ENCODE measurements at regions of chr12 and their contacts with region 1.

Region 1: GRCh38 chr12:19186722-19187661 is 57.5 kb downstream of the PLEKHA5 start:
- DNase-seq: peak; percentile 66
- H3K4me3 Mint-ChIP-seq: no peak overlapping the region
- H3K27ac Mint-ChIP-seq: peak overlapping the region; percentile 39
- H3K4me1 Mint-ChIP-seq: peaks cover 31% of the 10 kb centered on the region
- H3K27me3 Mint-ChIP-seq: no peaks in the 10 kb centered on the region
- CTCF ChIP-seq: peak; percentile 43

Region 2: DNA sequence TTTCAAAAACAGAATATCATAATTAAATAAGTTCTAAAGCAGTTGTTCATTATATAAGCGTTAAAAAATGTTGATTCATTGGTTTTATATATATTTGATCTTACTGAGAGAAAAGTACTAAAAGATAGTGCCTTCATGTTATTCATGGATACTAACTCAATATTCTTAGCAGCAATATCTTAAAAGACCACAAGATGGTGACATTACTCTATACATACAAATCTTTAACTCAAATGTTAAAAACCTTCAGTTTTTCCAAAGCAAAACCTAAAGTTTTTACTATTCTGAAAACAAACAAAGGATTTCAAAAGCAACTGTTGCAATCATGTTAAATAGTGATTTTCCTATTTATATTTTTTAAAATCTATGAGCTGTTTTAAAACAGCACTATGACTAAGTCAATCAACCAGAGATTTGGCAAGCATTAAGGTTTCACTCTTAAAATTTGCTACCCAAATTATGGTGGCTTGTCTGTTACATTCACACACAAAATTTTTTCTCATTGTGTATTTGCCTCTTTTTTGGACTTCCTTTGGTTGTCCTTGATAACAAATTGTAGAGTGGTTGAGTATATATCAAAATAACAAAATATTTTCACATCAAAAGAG is 1046.9 kb before region 1 on chr12:
- CTCF ChIA-PET with region 1: interaction called, 3 read pairs
- POLR2A ChIA-PET with region 1: no interaction called
- intact Hi-C with region 1: loop called (anchors 10 kb)
- DNase-seq: peak; percentile 45
- H3K4me3 Mint-ChIP-seq: no peak overlapping the region
- H3K27ac Mint-ChIP-seq: no peak overlapping the region
- H3K4me1 Mint-ChIP-seq: peaks cover 17% of the 10 kb centered on the region
- H3K27me3 Mint-ChIP-seq: no peaks in the 10 kb centered on the region
- CTCF ChIP-seq: peak; percentile 69

Region 3: DNA sequence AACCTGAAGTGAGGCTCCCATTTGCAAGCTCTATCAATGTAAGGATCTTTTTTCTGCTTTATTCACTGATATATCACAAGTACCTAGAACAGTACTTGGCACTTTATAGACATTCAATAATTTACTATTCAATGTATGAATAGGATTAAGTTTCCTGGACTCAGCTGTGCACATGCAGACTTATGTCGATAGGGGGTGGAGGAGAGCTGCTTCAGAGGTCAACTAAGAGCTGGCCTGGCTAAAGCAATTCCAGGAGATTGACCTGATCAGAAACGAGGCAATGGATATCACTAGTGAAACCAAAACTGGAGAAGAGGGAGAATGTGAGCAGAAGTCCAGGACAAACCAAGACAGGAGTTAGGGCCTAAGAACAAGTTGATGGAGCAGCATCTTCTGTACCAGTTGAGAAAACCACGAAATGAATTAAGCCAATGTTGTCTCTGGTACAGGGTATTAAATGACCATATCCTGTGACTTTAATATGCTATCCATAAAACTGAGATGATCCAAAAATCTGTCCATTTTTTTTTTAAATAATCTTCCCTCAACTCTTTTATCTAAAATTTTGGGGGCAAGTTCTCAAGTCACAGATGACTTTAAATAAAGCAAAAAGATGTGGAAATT is 756.5 kb before region 1 on chr12:
- CTCF ChIA-PET with region 1: interaction called, 32 read pairs
- POLR2A ChIA-PET with region 1: no interaction called
- intact Hi-C with region 1: loop called (anchors 1 kb)
- DNase-seq: peak; percentile 70
- H3K4me3 Mint-ChIP-seq: no peak overlapping the region
- H3K27ac Mint-ChIP-seq: no peak overlapping the region
- H3K4me1 Mint-ChIP-seq: peaks cover 10% of the 10 kb centered on the region
- H3K27me3 Mint-ChIP-seq: no peaks in the 10 kb centered on the region
- CTCF ChIP-seq: peak; percentile 91

Region 4: DNA sequence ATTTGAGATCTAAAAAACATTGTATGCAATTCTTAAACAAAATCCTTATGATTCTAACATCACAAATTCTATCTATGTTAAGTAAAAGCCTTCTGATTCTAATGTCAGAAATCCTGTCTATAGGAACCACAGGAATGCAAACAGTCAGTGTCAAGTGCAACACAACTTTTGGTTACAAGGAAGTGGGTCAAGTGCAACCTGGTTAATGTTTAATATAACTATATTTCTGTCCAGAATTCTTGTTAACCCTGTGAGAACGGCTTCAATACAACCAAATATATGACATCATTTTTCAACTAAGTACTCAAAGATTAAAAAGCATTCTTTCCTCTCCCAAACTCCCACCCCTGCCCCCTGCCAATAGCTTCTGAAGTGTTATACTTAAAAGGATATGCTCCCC is 165.3 kb before region 1 on chr12:
- CTCF ChIA-PET with region 1: no interaction called
- POLR2A ChIA-PET with region 1: no interaction called
- intact Hi-C with region 1: no loop called
- DNase-seq: no peak
- H3K4me3 Mint-ChIP-seq: no peak overlapping the region
- H3K27ac Mint-ChIP-seq: no peak overlapping the region
- H3K4me1 Mint-ChIP-seq: peaks cover 16% of the 10 kb centered on the region
- H3K27me3 Mint-ChIP-seq: no peaks in the 10 kb centered on the region
- CTCF ChIP-seq: no peak

Region 5: GRCh38 chr12:19095756-19096480 is 91.1 kb before region 1 on chr12:
- CTCF ChIA-PET with region 1: interaction called, 12 read pairs
- POLR2A ChIA-PET with region 1: interaction called, 3 read pairs
- intact Hi-C with region 1: no loop called
- DNase-seq: peak; percentile 42
- H3K4me3 Mint-ChIP-seq: peak overlapping the region; percentile 20
- H3K27ac Mint-ChIP-seq: peak overlapping the region; percentile 90
- H3K4me1 Mint-ChIP-seq: peaks cover 14% of the 10 kb centered on the region
- H3K27me3 Mint-ChIP-seq: no peaks in the 10 kb centered on the region
- CTCF ChIP-seq: no peak

Region 6: DNA sequence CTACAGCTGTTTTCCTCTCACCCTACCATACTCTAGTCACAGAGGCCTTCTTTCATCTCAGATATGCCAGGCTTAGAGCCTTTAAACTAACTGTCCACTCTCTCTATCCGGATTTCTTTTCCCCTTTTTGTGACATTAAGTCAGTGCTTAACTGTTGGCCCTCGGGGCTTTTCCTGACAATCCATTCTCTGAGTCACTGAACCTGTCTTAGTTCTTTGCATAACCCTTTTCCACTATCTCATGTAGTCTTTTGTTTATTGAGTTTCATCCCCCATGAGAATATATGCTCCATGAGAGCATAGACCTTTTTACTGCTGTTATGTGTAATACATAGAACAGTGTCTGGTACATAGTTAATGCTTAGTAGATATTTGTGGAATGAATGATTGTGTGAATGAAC is 11.3 kb after region 1 on chr12:
- CTCF ChIA-PET with region 1: interaction called, 16 read pairs
- POLR2A ChIA-PET with region 1: no interaction called
- intact Hi-C with region 1: no loop called
- DNase-seq: peak; percentile 78
- H3K4me3 Mint-ChIP-seq: no peak overlapping the region
- H3K27ac Mint-ChIP-seq: no peak overlapping the region
- H3K4me1 Mint-ChIP-seq: peaks cover 24% of the 10 kb centered on the region
- H3K27me3 Mint-ChIP-seq: no peaks in the 10 kb centered on the region
- CTCF ChIP-seq: no peak

Region 7: DNA sequence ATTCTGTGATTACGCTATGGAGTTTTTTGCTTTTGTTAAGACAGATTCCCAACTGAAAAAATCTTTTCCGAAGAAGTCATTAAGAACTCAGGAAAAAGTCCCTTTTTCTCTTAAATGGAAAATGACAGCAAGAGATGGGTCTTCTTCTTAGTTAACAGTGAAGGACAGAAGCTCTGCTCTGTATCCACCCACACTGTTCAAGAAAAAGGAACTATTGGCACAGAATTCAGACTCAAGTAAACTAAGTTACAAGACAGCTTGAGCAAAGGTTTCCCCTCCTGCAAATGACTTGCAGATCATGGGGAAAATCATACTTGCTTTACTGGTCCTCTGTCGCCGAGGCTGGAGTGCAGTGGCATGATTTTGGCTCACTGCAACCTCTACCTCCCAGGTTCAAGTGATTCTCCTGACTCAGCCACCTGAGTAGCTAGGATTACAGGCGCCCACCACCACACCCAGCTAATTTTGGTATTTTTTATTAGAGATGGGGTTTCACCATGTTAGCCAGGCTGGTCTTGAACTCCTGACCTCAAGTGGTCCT is 115.2 kb after region 1 on chr12:
- CTCF ChIA-PET with region 1: no interaction called
- POLR2A ChIA-PET with region 1: no interaction called
- intact Hi-C with region 1: no loop called
- DNase-seq: no peak
- H3K4me3 Mint-ChIP-seq: no peak overlapping the region
- H3K27ac Mint-ChIP-seq: no peak overlapping the region
- H3K4me1 Mint-ChIP-seq: peaks cover 12% of the 10 kb centered on the region
- H3K27me3 Mint-ChIP-seq: no peaks in the 10 kb centered on the region
- CTCF ChIP-seq: no peak